AG04449 (cell line): ENCODE measurements at regions of chr5 and their contacts with region 1.

Region 1: DNA sequence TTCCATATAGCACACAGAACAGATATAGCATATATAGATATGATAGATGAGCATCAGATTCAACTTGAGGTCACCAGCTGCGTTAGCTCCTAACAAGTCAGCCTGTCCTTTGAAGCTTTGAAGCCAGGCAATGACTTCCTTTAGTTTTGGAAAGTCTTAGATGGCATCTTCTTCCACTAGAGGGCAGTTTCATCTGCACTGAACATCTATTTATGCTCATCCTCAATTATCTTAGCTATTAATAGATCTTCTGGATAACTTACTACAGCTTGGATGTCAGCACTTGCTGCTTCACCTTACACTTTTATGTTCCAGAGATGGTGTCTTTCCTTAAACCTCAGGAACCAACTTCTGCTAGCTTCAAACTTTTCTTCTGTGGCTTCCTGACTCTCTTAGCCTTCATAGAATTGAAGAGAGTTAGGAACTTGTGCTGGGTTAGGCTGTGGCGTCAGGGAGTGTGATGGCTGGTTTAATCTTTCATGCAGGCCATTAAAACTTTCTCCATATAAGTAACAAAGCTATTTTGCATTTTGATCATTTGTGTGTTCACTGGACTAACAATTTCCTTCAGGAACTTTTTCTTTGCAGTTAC is 1401.4 kb downstream of the EFNA5 start:
- DNase-seq: no peak
- H3K4me3 ChIP-seq: no peak overlapping the region
- CTCF ChIP-seq: peak; percentile 56

Region 2: DNA sequence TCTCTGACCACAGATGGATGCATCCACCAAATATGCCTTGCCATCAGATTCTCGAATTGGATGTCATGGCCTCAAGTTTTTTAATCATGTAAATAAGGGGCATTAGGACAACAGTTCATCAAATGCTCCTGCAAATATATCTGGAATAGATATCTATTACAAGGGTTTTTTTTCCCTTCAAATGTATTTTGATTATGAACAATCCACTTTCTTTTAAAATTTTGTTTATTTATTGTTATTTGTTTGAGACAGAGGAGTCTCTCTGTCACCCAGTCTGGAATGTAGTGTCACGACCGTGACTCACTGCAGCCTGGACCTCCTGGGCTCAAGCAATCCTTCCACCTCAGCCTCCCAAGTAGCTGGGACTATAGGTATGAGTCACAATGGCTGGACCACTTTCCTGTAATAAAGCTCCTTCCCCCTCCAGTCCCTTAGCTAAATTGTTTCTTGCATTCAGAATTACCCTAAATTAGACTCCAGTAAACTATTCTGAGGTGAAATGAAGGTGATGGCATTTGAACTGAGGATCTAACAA is 10.7 kb before region 1 on chr5:
- CTCF ChIA-PET with region 1: interaction called, 11 read pairs
- POLR2A ChIA-PET with region 1: no interaction called
- DNase-seq: no peak
- H3K4me3 ChIP-seq: no peak overlapping the region
- CTCF ChIP-seq: no peak